Activated CD8-positive, alpha-beta T cell treated with anti-CD3 and anti-CD28 coated beads for 36 hours (primary cell): ENCODE measurements at regions of chr14 and their contacts with region 1.

Region 1: DNA sequence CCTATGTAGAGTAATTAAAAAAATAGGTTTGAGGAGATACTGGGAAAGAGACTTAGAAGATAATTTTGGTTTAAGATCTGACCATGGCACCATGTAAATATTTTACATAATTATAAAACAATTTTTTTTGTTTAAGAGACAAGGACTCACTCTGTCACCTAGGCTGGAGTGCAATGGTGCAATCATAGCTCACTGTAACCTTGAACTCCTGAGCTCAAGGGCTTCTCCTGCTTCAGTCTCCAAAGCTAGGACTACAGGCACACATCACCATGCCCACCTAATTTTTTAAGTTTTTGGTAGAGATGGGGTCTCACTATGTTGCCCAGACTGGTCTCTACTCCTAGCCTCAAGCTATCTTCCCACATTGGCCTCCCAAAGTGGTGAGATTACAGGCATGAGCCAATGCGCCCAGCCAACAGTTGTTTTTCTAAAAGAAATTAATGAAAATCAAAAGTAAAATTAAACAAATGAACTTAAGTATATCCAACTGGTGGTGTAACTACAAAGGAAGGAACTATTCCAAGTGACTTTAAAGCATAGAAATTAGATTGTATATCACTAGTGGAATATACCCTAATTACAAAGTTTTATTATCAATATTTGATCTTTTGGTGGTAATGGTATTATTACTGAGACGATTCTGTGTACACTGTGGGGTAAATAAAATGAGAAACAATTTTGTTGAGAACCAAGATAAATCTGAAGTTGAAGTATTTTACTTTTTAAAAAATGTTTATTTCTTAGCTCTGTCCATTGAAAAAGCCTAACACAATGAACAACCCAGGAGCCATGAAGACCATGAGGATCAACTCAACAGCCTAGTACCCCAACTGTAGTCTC is 29.1 kb downstream of the COCH start:
- DNase-seq: no peak
- ATAC-seq: no peak
- H3K4me3 Mint-ChIP-seq: no peak overlapping the region
- H3K27ac Mint-ChIP-seq: no peak overlapping the region
- H3K4me1 Mint-ChIP-seq: peaks cover 9% of the 10 kb centered on the region
- H3K27me3 Mint-ChIP-seq: no peaks in the 10 kb centered on the region
- CTCF ChIP-seq: no peak

Region 2: DNA sequence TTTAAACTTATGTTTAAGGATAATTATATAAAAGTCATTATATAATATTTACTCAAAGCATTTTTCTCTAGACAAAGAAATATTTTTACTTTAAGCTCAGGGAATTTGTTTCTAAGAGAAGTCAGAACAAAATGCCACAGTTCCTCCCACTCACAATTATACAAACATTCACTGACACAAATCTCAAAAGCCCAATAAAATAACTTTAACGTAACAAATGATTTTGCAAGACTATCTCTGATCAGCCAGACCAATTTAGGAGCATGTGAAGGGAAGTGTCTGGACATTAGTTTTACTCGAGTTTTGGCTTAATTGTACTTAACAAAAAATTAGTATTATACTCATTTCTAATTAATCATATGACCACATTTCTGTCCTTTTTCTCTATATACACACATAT is 12.1 kb after region 1 on chr14:
- CTCF ChIA-PET with region 1: interaction called, 11 read pairs
- POLR2A ChIA-PET with region 1: no interaction called
- intact Hi-C with region 1: no loop called
- DNase-seq: no peak
- ATAC-seq: no peak
- H3K4me3 Mint-ChIP-seq: no peak overlapping the region
- H3K27ac Mint-ChIP-seq: no peak overlapping the region
- H3K4me1 Mint-ChIP-seq: peaks cover under 1% of the 10 kb centered on the region
- H3K27me3 Mint-ChIP-seq: no peaks in the 10 kb centered on the region
- CTCF ChIP-seq: no peak

Region 3: GRCh38 chr14:30982533-30982932 is 79.0 kb after region 1 on chr14:
- CTCF ChIA-PET with region 1: no interaction called
- POLR2A ChIA-PET with region 1: no interaction called
- intact Hi-C with region 1: no loop called
- DNase-seq: no peak
- ATAC-seq: no peak
- H3K4me3 Mint-ChIP-seq: no peak overlapping the region
- H3K27ac Mint-ChIP-seq: no peak overlapping the region
- H3K4me1 Mint-ChIP-seq: peaks cover 11% of the 10 kb centered on the region
- H3K27me3 Mint-ChIP-seq: no peaks in the 10 kb centered on the region
- CTCF ChIP-seq: no peak